ENCODE measurements at regions of chr1 and their contacts with region 1.

Region 1: GRCh38 chr1:226912587-226913176 is 27.4 kb upstream of the COQ8A start:
- DNase-seq: peak; percentile 71
- H3K4me3 ChIP-seq: no peak overlapping the region
- H3K27ac ChIP-seq: no peak overlapping the region
- H3K4me1 ChIP-seq: no peaks in the 10 kb centered on the region
- H3K27me3 ChIP-seq: no peaks in the 10 kb centered on the region
- CTCF ChIP-seq: peak; percentile 34 to 42 (median 38)
- POLR2A ChIP-seq: no peak

Region 2: GRCh38 chr1:226778657-226779058 is 134.0 kb before region 1 on chr1:
- intact Hi-C with region 1: no loop called
- DNase-seq: peak; percentile 69
- H3K4me3 ChIP-seq: no peak overlapping the region
- H3K27ac ChIP-seq: no peak overlapping the region
- H3K4me1 ChIP-seq: peaks cover 14% of the 10 kb centered on the region
- H3K27me3 ChIP-seq: no peaks in the 10 kb centered on the region
- CTCF ChIP-seq: no peak
- POLR2A ChIP-seq: no peak

Region 3: GRCh38 chr1:227762233-227762911 is 849.7 kb after region 1 on chr1:
- intact Hi-C with region 1: loop called (anchors 10 kb)
- DNase-seq: peak; percentile 86
- H3K4me3 ChIP-seq: no peak overlapping the region
- H3K27ac ChIP-seq: no peak overlapping the region
- H3K4me1 ChIP-seq: no peaks in the 10 kb centered on the region
- H3K27me3 ChIP-seq: no peaks in the 10 kb centered on the region
- CTCF ChIP-seq: peak; percentile 71 to 83 (median 83)
- POLR2A ChIP-seq: no peak

Measured in testis (tissue), 5 donors.